Right ventricle myocardium superior (tissue), 1 donor: ENCODE measurements at regions of chr2 and their contacts with region 1.

Region 1: DNA sequence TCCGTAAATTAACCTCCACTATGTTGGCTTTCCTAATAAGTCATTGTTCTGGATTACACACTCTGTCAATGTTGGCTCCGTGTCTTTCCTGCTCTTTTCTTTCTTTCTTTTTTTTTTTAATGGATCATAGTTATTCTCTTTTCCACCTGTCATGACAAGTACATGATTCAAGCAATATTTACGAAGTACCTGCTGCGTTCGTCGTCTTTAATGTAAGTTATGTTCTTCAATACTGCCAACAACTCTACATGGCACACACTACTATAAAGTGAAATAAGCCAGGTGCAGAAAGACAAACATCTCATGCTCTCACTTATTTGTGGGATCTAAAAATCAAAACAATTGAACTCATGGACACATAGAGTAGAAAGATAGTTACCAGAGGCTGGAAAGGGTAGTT is 239.1 kb downstream of the SCG2 start:
- DNase-seq: no peak
- ATAC-seq: no peak

Region 2: DNA sequence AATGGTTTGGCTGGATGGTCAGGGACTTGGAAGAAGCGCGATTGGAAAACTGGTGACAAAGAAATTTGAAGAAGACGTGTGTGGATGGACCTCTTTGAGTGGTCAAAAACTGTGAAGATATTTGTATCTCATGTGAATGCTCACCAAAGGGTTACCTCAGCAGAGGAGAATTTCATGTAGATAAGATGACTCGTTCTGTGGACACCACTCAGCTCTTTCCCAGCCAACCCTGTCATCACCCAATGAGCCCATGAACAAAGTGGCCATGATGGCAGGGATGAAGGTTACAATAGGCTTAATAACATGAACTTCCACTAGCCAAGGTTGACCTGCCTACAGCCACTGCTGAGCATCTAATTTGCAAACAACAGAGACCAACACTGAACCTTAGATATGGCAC is 62.8 kb before region 1 on chr2:
- intact Hi-C with region 1: loop called (anchors 2 kb)
- DNase-seq: no peak
- ATAC-seq: no peak